Dorsolateral prefrontal cortex (tissue), 120 donors: ENCODE measurements at regions of chr1 and their contacts with region 1.

Region 1: GRCh38 chr1:200409761-200410565 is at the start of gene ZNF281:
- DNase-seq: peak; percentile 85 to 94 (median 92)
- H3K4me3 ChIP-seq: peak within 1 kb of the TSS; percentile 63 to 100 (median 93)
- H3K27ac ChIP-seq: peak within 1 kb of the TSS; percentile 49 to 96 (median 89)
- H3K27me3 ChIP-seq: no peaks in the 10 kb centered on the region
- CTCF ChIP-seq: peak in 21 of 56 donors; percentile 2 to 45 (median 25)
- total RNA-seq, gene ZNF281: 12.6 to 38.3 (median 21.6) TPM

Region 2: DNA sequence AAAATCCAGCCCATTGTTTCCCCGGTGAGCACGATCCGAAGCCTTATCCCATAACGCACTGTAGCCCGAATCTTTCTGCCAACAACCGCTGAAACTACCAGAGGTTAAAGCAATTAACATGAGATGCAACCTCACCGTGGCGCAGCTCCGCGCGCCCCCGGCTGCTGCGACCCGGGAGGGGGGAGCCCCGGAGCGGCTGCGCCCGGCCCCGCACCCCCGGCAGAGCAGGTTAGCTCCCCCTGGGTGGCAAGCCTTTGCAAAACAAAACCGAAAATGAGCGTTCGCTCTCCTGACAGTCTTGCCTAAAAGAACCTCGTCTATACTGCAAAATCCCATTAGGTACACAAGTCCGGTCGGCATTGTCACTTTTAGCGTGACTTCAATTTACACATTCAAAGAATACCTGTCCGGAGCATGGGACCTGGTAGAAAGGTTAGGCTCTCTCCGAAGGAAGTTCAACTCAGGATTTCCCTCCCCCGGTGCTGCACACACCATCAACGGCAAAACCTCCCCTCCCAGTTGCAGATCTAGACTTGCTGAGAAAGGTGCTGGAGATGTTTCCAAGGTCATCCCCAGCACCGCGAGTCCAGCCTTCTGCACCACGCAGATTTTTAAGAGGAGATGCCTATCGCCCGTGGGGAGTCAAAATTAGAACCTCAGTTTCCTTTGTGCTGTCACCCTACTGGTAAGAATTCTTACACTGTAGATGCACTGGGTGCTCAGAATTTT is 107.6 kb before region 1 on chr1:
- intact Hi-C with region 1: loop called (anchors 5 kb)
- DNase-seq: peak in 3 of 10 donors; percentile 25 to 61 (median 32)
- H3K4me3 ChIP-seq: peak overlapping the region; percentile 50 to 92 (median 74)
- H3K27ac ChIP-seq: peak overlapping the region; percentile 11 to 91 (median 82)
- H3K27me3 ChIP-seq: peaks cover 0 to 7% (median 0%) of the 10 kb centered on the region in 45 donors
- CTCF ChIP-seq: peak in 18 of 56 donors; percentile 4 to 40 (median 21)

Region 3: DNA sequence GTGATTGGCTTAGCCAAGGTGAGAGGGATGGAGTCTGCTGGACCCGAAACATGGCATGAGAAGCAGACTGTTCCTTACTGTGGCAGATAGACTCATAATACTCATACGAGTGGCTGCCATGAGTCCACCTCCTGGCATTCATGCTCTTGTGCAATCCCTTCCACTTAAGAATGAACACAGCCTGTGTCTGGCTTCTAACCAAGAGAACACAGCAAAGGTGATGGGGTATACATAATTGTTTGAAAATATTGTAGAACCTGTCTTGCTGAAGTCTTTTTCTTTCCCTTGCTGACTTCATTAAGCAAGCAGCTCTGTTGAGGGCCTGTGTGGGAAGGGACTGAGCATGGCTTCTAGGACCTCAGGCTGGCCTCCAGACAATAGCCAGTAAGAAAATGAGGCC is 86.0 kb before region 1 on chr1:
- intact Hi-C with region 1: loop called in 1 of 2 experiments (anchors 5 kb)
- DNase-seq: no peak
- H3K4me3 ChIP-seq: no peak overlapping the region
- H3K27ac ChIP-seq: no peak overlapping the region
- H3K27me3 ChIP-seq: peaks cover 0 to 3% (median 0%) of the 10 kb centered on the region in 45 donors
- CTCF ChIP-seq: no peak

Region 4: GRCh38 chr1:200364091-200364759 is 45.7 kb before region 1 on chr1:
- intact Hi-C with region 1: loop called (anchors 5 kb)
- DNase-seq: no peak
- H3K4me3 ChIP-seq: no peak overlapping the region
- H3K27ac ChIP-seq: peak overlapping the region in 51 of 59 donors; percentile 6 to 96 (median 85)
- H3K27me3 ChIP-seq: no peaks in the 10 kb centered on the region
- CTCF ChIP-seq: no peak

Region 5: GRCh38 chr1:200488375-200489165 is 78.6 kb after region 1 on chr1:
- intact Hi-C with region 1: loop called (anchors 5 to 10 kb)
- DNase-seq: peak in 5 of 10 donors; percentile 7 to 61 (median 44)
- H3K4me3 ChIP-seq: peak overlapping the region in 28 of 59 donors; percentile 4 to 56 (median 30)
- H3K27ac ChIP-seq: no peak overlapping the region
- H3K27me3 ChIP-seq: peaks cover 0 to 12% (median 0%) of the 10 kb centered on the region in 45 donors
- CTCF ChIP-seq: peak; percentile 58 to 98 (median 90)